ENCODE measurements at regions of chr1 and their contacts with region 1.

Region 1: GRCh38 chr1:226121587-226122400 is 59.3 kb downstream of the H3-3A start:
- DNase-seq: peak; percentile 89 to 97 (median 96)
- ATAC-seq: peak; percentile 89
- H3K4me3 ChIP-seq: peak overlapping the region; percentile 56
- H3K27ac ChIP-seq: peak overlapping the region; percentile 83
- H3K4me1 ChIP-seq: peaks cover 10 to 39% of the 10 kb centered on the region in 2 experiments; a peak in 3 of 5 replicates
- H3K27me3 ChIP-seq: no peaks in the 10 kb centered on the region
- CTCF ChIP-seq: peak; percentile 84 to 93 (median 87)
- EP300 ChIP-seq: no peak; the same call in 1 of the 2 replicates
- POLR2A ChIP-seq: peak; percentile 63; the same call in 1 of the 2 replicates
- RAD21 ChIP-seq: peak; percentile 92 to 99

Region 2: DNA sequence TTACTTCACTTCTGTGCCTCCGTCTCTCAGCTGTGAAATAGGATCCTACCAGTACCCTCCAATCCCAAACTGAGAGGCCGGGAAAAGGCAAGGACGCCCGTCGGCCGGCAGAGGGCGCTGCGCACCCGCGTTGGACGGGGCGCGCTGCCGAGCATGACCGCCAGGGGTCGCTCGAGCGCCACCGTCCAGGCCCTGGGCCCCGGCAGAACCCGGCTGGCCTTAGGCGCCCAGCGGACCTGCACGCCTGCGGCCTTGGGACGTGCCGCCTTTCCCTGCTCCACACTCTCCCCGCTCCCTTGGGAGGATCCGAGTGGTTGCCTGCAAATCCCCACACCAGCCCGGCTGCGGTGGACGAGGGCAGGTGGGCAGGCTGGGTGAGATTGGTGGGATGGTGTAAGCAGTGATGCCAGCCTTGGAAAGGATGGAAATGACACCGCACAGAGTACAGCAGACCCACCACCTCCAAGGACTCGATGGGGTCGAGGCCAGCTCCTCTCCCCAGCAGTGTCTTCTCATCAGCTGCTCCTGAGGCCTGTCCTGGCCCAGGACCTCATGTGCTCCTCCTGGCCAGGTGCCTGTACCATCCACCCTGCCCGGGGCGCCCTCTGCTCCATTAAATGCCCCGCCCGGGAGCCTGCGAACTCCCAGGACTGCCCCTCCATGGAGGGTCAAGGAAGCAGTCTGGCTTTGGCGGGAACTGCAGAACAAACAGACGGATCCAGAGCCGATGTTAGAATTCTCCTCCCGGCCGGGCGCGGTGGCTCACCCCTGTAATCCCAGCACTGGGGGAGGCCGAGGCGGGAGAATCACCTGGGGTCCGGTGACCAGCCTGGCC is 646.6 kb before region 1 on chr1:
- CTCF ChIA-PET with region 1: interaction called, 28 read pairs
- POLR2A ChIA-PET with region 1: no interaction called
- in situ Hi-C with region 1: loop called (anchors 10 kb)
- intact Hi-C with region 1: no loop called
- DNase-seq: peak; percentile 81 to 94 (median 91)
- ATAC-seq: peak; percentile 90
- H3K4me3 ChIP-seq: no peak overlapping the region
- H3K27ac ChIP-seq: no peak overlapping the region
- H3K4me1 ChIP-seq: peaks cover 0 to 16% of the 10 kb centered on the region in 2 experiments; a peak in 3 of 5 replicates
- H3K27me3 ChIP-seq: peaks cover 15 to 34% of the 10 kb centered on the region in 2 experiments; a peak in 4 of 5 replicates
- CTCF ChIP-seq: peak; percentile 100
- EP300 ChIP-seq: no peak
- POLR2A ChIP-seq: no peak
- RAD21 ChIP-seq: peak; percentile 100

Region 3: GRCh38 chr1:225962440-225962975 is 159.3 kb before region 1 on chr1:
- CTCF ChIA-PET with region 1: interaction called, 8 read pairs
- POLR2A ChIA-PET with region 1: interaction called, 5 read pairs
- in situ Hi-C with region 1: no loop called
- intact Hi-C with region 1: loop called (anchors 1 kb)
- DNase-seq: peak; percentile 89 to 91 (median 90)
- ATAC-seq: peak; percentile 99
- H3K4me3 ChIP-seq: peak overlapping the region; percentile 15
- H3K27ac ChIP-seq: no peak overlapping the region; the same call in 2 of the 3 replicates
- H3K4me1 ChIP-seq: peaks cover 0 to 12% of the 10 kb centered on the region in 2 experiments; a peak in 4 of 5 replicates
- H3K27me3 ChIP-seq: no peaks in the 10 kb centered on the region
- CTCF ChIP-seq: peak; percentile 99
- EP300 ChIP-seq: no peak
- POLR2A ChIP-seq: no peak
- RAD21 ChIP-seq: peak; percentile 87 to 97

Region 4: GRCh38 chr1:225987491-225988316 is 134.1 kb before region 1 on chr1:
- CTCF ChIA-PET with region 1: interaction called, 3 read pairs
- POLR2A ChIA-PET with region 1: interaction called, 3 read pairs
- in situ Hi-C with region 1: loop called (anchors 5 kb)
- intact Hi-C with region 1: no loop called
- DNase-seq: peak in 2 of 4 experiments; percentile 42 to 71
- ATAC-seq: peak; percentile 79
- H3K4me3 ChIP-seq: no peak overlapping the region
- H3K27ac ChIP-seq: no peak overlapping the region; the same call in 2 of the 3 replicates
- H3K4me1 ChIP-seq: no peaks in the 10 kb centered on the region
- H3K27me3 ChIP-seq: no peaks in the 10 kb centered on the region
- CTCF ChIP-seq: peak; percentile 62 to 82 (median 68); a peak in 5 of 6 replicates
- EP300 ChIP-seq: no peak
- POLR2A ChIP-seq: no peak
- RAD21 ChIP-seq: peak; percentile 62 to 74

Region 5: GRCh38 chr1:226201029-226201593 is 79.3 kb after region 1 on chr1:
- CTCF ChIA-PET with region 1: interaction called, 10 read pairs
- POLR2A ChIA-PET with region 1: interaction called, 5 read pairs
- in situ Hi-C with region 1: no loop called
- intact Hi-C with region 1: loop called (anchors 1 kb)
- DNase-seq: peak in 3 of 4 experiments; percentile 41 to 66 (median 53)
- ATAC-seq: peak; percentile 80
- H3K4me3 ChIP-seq: no peak overlapping the region
- H3K27ac ChIP-seq: no peak overlapping the region
- H3K4me1 ChIP-seq: peaks cover 0 to 6% of the 10 kb centered on the region in 2 experiments; a peak in 1 of 5 replicates
- H3K27me3 ChIP-seq: no peaks in the 10 kb centered on the region
- CTCF ChIP-seq: peak; percentile 65 to 80 (median 71)
- EP300 ChIP-seq: no peak
- POLR2A ChIP-seq: no peak
- RAD21 ChIP-seq: peak; percentile 50 to 79

Region 6: GRCh38 chr1:226407497-226408284 is 285.9 kb after region 1 on chr1 and contains the start of gene PARP1:
- CTCF ChIA-PET with region 1: no interaction called
- POLR2A ChIA-PET with region 1: no interaction called
- in situ Hi-C with region 1: no loop called
- intact Hi-C with region 1: loop called (anchors 1 kb)
- DNase-seq: peak; percentile 96 to 99 (median 98)
- ATAC-seq: peak; percentile 88
- H3K4me3 ChIP-seq: peak within 1 kb of the TSS; percentile 78
- H3K27ac ChIP-seq: peak within 1 kb of the TSS; percentile 84
- H3K4me1 ChIP-seq: peaks cover 33 to 34% of the 10 kb centered on the region in 2 experiments
- H3K27me3 ChIP-seq: no peaks in the 10 kb centered on the region; a peak in 1 of 5 replicates
- CTCF ChIP-seq: peak; percentile 69 to 88 (median 81)
- EP300 ChIP-seq: peak; percentile 44; the same call in 1 of the 2 replicates
- POLR2A ChIP-seq: peak; percentile 94
- RAD21 ChIP-seq: peak; percentile 1 to 35; a peak in 2 of 4 replicates
- polyA plus RNA-seq, gene PARP1: 121 to 211 TPM